Heart right ventricle (tissue), 16 donors: ENCODE measurements at regions of chr2 and their contacts with region 1.

Region 1: GRCh38 chr2:31270136-31270535 is 36.2 kb downstream of the EHD3 start:
- DNase-seq: no peak
- ATAC-seq: no peak
- H3K4me3 ChIP-seq: no peak overlapping the region
- H3K27ac ChIP-seq: peak overlapping the region in 1 of 10 donors; percentile 26
- H3K4me1 ChIP-seq: peaks cover 0 to 42% (median 11%) of the 10 kb centered on the region in 9 donors
- H3K27me3 ChIP-seq: no peaks in the 10 kb centered on the region
- CTCF ChIP-seq: no peak

Region 2: DNA sequence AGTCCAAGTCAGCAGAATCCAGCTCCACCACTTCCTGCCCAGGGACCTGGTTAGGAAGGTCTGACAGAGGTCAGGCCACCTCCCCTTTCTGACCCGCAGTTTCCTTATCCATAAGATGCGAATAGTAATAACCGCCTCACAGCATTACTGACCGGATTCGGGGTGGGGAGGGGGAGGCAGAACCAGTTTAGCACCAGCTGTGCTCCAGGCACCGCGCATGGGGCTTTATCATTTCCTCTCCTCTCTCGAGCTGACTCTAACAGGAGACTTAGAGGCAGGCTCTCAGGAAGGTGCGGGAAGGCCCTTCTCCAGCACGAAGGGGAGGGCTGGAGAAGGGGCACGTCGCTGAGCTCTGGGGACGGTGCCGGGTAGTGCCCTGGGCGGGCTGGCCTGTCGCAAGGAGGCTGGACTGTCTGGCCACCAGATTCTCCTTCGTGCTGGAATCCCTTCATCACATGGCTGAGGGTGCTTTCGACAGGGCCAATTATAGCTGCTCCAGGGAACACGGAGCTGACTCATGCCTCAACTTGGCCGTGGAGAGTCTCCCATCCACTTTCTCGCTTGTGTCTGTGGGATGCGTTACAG is 30.5 kb before region 1 on chr2:
- intact Hi-C with region 1: loop called in 2 of 10 experiments (anchors 5 kb)
- DNase-seq: peak; percentile 62 to 80
- ATAC-seq: peak; percentile 86 to 92 (median 91)
- H3K4me3 ChIP-seq: no peak overlapping the region
- H3K27ac ChIP-seq: peak overlapping the region; percentile 66 to 96 (median 86)
- H3K4me1 ChIP-seq: peaks cover 16 to 76% (median 60%) of the 10 kb centered on the region in 9 donors
- H3K27me3 ChIP-seq: no peaks in the 10 kb centered on the region
- CTCF ChIP-seq: no peak

Region 3: GRCh38 chr2:31282634-31283033 is 12.5 kb after region 1 on chr2:
- intact Hi-C with region 1: no loop called
- DNase-seq: no peak
- ATAC-seq: no peak
- H3K4me3 ChIP-seq: no peak overlapping the region
- H3K27ac ChIP-seq: peak overlapping the region in 1 of 10 donors; percentile 31
- H3K4me1 ChIP-seq: peaks cover 0 to 26% (median 7%) of the 10 kb centered on the region in 9 donors
- H3K27me3 ChIP-seq: no peaks in the 10 kb centered on the region
- CTCF ChIP-seq: no peak